ENCODE measurements at regions of chr5 and their contacts with region 1.

Region 1: DNA sequence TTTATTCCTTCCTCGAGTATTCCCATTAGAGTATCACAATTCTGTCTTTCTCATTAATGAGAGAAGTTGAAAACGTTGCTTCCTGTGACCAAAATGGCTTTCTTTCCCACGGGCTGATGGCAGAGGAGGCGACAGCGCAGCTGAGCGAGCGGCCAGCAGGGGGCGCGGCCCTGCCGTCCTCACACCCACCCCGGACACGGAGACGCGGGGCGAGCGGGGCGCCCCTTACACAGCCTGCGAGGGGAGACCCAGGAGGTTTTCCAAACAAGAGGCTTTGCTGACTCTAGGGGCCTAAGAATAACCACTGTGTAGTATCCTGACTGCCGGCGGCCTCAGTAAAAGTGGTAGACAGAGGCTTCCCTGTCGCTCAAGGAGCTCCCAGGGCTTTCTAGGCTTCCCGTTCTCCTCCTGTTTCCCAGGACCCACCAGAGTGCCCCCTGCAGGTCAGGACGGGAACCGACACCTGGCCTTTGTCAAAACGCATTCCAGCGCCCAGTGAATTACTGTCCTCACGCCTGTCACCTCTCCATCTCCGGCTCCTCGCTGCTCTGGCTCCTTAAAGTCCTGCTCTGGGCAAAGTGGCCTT is 27.3 kb upstream of the FGF1 start:
- DNase-seq: peak; percentile 70 to 93 (median 79)
- ATAC-seq: peak; percentile 93
- H3K4me3 ChIP-seq: peak overlapping the region; percentile 50
- H3K4me3 Mint-ChIP-seq: peak overlapping the region; percentile 76
- H3K27ac ChIP-seq: no peak overlapping the region
- H3K27ac Mint-ChIP-seq: no peak overlapping the region
- H3K4me1 ChIP-seq: peaks cover 15% of the 10 kb centered on the region
- H3K4me1 Mint-ChIP-seq: peaks cover 17% of the 10 kb centered on the region
- H3K27me3 ChIP-seq: peaks cover 0 to 3% of the 10 kb centered on the region in 2 experiments
- H3K27me3 Mint-ChIP-seq: peaks cover 9% of the 10 kb centered on the region
- CTCF ChIP-seq: peak; percentile 99

Region 2: GRCh38 chr5:142206801-142207200 is 506.4 kb before region 1 on chr5:
- CTCF ChIA-PET with region 1: no interaction called
- POLR2A ChIA-PET with region 1: no interaction called
- intact Hi-C with region 1: no loop called
- DNase-seq: no peak
- ATAC-seq: no peak
- H3K4me3 ChIP-seq: no peak overlapping the region
- H3K4me3 Mint-ChIP-seq: no peak overlapping the region
- H3K27ac ChIP-seq: no peak overlapping the region
- H3K27ac Mint-ChIP-seq: no peak overlapping the region
- H3K4me1 ChIP-seq: no peaks in the 10 kb centered on the region
- H3K4me1 Mint-ChIP-seq: no peaks in the 10 kb centered on the region
- H3K27me3 ChIP-seq: no peaks in the 10 kb centered on the region
- H3K27me3 Mint-ChIP-seq: no peaks in the 10 kb centered on the region
- CTCF ChIP-seq: no peak

Region 3: DNA sequence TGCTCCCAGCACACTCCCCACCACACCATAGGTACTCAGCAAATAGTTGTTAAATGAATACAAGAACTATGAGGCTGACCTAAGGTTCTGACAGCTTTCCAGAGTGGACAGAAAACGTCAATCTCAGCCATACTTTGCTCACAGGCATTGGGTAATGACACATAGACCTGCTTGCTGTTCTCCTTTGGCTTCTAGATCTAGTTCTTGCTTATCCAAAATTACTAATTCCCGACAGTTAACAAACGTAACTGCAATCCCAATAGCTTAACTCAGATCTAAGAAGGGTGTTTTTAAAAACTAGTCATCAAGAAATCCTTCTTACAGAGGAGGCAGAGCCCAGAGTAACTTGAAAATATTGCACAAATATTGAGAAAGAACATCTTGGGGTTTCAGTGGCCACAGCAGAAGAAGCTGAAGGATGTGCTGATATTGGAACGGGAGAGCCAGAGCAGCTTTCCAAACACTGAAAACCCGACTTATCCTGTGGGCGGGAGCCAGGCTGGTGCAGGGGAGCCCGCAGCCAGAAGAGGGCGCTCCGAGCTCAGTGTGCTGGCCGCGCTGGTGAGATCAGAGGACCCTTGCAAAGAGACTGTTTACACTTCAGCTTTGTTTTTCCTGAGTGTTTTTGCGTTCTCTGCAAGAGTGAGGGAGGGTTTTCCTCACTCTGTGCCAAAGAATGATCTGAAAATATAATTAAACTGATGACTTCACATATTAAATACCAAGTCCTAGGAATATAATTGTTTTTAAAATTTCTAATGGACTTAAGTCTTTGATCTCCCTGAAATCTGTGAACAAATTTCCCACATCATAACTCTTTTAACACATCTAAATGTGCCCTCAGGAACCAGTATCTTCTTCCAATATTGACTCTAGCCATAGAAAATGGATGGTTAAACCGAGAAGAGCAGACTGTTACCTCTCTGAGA is 57.6 kb before region 1 on chr5:
- CTCF ChIA-PET with region 1: interaction called, 13 read pairs
- POLR2A ChIA-PET with region 1: no interaction called
- intact Hi-C with region 1: no loop called
- DNase-seq: peak; percentile 43 to 78 (median 60)
- ATAC-seq: peak; percentile 87
- H3K4me3 ChIP-seq: no peak overlapping the region
- H3K4me3 Mint-ChIP-seq: no peak overlapping the region
- H3K27ac ChIP-seq: no peak overlapping the region
- H3K27ac Mint-ChIP-seq: no peak overlapping the region
- H3K4me1 ChIP-seq: no peaks in the 10 kb centered on the region
- H3K4me1 Mint-ChIP-seq: peaks cover 8% of the 10 kb centered on the region
- H3K27me3 ChIP-seq: peaks cover 3 to 6% of the 10 kb centered on the region in 2 experiments
- H3K27me3 Mint-ChIP-seq: peaks cover 16% of the 10 kb centered on the region
- CTCF ChIP-seq: peak; percentile 93

Region 4: DNA sequence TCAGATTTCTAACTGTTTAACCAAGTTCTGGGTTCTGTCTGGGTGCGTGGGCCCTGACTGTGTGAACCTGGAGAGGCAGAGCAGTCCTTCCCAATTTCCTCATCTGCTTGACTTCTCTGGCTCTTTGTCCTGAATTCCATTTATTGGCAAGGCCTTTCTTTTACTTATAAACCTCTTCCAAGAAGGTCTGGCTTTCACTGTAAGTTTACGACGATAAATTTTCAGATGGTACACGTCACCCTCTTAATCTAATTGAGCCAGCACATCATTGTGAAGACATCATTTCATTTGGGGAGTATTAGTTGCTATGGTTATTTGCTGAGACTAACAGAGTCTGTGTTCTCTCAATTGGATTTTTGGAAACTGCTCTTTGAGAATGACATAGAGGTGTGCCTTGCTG is 149.4 kb after region 1 on chr5:
- CTCF ChIA-PET with region 1: interaction called, 10 read pairs
- POLR2A ChIA-PET with region 1: interaction called, 3 read pairs
- intact Hi-C with region 1: loop called (anchors 1 to 2 kb)
- DNase-seq: no peak
- ATAC-seq: no peak
- H3K4me3 ChIP-seq: no peak overlapping the region
- H3K4me3 Mint-ChIP-seq: no peak overlapping the region
- H3K27ac ChIP-seq: no peak overlapping the region
- H3K27ac Mint-ChIP-seq: no peak overlapping the region
- H3K4me1 ChIP-seq: peaks cover 22% of the 10 kb centered on the region
- H3K4me1 Mint-ChIP-seq: peaks cover 58% of the 10 kb centered on the region
- H3K27me3 ChIP-seq: no peaks in the 10 kb centered on the region
- H3K27me3 Mint-ChIP-seq: no peaks in the 10 kb centered on the region
- CTCF ChIP-seq: no peak

Region 5: GRCh38 chr5:142881076-142881783 is 168.0 kb after region 1 on chr5:
- CTCF ChIA-PET with region 1: interaction called, 24 read pairs
- POLR2A ChIA-PET with region 1: interaction called, 3 read pairs
- intact Hi-C with region 1: loop called (anchors 1 kb)
- DNase-seq: peak in 3 of 14 experiments; percentile 20 to 71 (median 59)
- ATAC-seq: no peak
- H3K4me3 ChIP-seq: no peak overlapping the region
- H3K4me3 Mint-ChIP-seq: no peak overlapping the region
- H3K27ac ChIP-seq: no peak overlapping the region
- H3K27ac Mint-ChIP-seq: no peak overlapping the region
- H3K4me1 ChIP-seq: no peaks in the 10 kb centered on the region
- H3K4me1 Mint-ChIP-seq: no peaks in the 10 kb centered on the region
- H3K27me3 ChIP-seq: no peaks in the 10 kb centered on the region
- H3K27me3 Mint-ChIP-seq: no peaks in the 10 kb centered on the region
- CTCF ChIP-seq: no peak

Region 6: DNA sequence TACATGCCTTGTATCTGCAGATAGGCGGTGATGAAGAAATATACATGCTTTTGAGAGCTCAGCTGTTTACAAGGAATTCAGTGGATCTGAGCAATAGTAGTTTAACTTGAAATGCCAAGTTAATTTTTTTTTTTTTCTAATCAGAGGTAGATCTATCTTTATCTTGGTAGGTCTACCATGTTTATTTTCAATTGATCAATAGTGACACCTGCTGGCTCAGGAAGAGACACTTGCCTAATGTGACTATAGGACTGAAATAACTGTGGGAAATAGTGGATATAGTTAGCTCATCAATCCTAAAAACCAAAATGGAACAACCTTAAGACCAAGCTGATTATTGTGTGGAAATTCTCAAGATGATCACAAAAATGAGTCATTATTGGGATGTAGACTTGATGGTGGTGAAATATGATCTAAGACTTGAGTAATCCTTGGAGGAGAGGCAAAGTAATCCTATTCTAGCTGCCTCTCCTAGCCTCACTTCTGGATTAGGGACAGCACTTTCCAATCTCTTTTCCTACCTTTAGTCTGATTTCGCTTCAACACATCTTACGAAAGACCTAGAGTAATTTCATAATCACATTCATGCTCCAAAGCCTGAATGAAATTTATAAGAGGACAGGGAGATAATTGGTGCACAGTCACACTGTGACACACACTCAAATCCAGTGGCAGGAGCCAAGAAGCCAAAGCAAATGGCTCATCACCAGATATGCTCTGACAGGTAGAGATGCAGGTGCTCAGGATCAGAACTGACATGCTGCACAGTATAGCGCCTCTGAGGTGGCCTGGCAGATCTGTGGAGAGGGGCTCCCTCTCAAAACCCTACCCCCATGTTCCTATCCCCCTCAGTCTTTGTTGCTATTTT is 1255.0 kb after region 1 on chr5:
- CTCF ChIA-PET with region 1: no interaction called
- POLR2A ChIA-PET with region 1: no interaction called
- intact Hi-C with region 1: loop called in 1 of 2 experiments (anchors 10 kb)
- DNase-seq: peak in 4 of 14 experiments; percentile 5 to 52 (median 47)
- ATAC-seq: no peak
- H3K4me3 ChIP-seq: no peak overlapping the region
- H3K4me3 Mint-ChIP-seq: no peak overlapping the region
- H3K27ac ChIP-seq: no peak overlapping the region
- H3K27ac Mint-ChIP-seq: no peak overlapping the region
- H3K4me1 ChIP-seq: no peaks in the 10 kb centered on the region
- H3K4me1 Mint-ChIP-seq: no peaks in the 10 kb centered on the region
- H3K27me3 ChIP-seq: no peaks in the 10 kb centered on the region
- H3K27me3 Mint-ChIP-seq: peaks cover 7% of the 10 kb centered on the region
- CTCF ChIP-seq: peak; percentile 60

Measured in CD4-positive, alpha-beta T cell (primary cell).